Panc1 (cell line): ENCODE measurements at regions of chr1 and their contacts with region 1.

Region 1: GRCh38 chr1:222095606-222096475 is 354.0 kb upstream of the DUSP10 start:
- DNase-seq: peak; percentile 32
- ATAC-seq: peak; percentile 72; the same call in 1 of the 2 replicates
- H3K4me3 ChIP-seq: no peak overlapping the region
- H3K27ac ChIP-seq: no peak overlapping the region
- H3K4me1 ChIP-seq: no peaks in the 10 kb centered on the region
- H3K27me3 ChIP-seq: no peaks in the 10 kb centered on the region
- CTCF ChIP-seq: peak; percentile 91

Region 2: DNA sequence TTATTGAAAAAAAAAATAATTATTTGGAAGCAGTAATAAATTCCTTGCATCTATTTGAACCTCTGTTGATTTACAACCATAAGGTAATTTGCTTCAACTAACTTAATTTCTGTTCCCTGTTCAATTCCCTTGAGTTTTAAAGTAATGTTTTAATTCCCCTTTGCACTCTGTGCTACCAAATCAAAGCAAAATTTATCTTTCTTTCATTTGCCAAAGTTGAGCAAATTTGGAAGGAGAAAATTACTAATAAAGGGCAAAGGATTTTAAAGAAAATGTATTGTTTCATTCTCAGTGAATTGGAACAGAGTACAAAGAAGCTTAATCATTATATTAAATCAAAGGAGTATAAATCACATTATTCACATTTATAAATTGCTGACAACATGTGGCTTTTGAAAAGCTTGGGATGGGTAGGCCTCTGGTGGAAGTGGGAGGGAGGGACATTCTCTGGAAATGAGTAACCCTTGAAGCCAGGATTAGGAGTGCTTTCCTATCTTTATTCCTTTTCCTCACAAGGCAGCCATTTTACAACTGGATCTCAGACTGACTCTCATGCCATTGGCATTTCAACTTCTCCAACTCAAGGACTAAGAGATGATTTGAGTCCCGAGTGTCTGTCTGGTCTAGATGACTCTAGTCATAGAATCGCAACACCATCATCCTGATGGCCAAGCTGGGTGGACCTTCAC is 22.4 kb before region 1 on chr1:
- CTCF ChIA-PET with region 1: no interaction called
- POLR2A ChIA-PET with region 1: no interaction called
- in situ Hi-C with region 1: no loop called
- intact Hi-C with region 1: no loop called
- DNase-seq: no peak
- ATAC-seq: no peak
- H3K4me3 ChIP-seq: no peak overlapping the region
- H3K27ac ChIP-seq: no peak overlapping the region
- H3K4me1 ChIP-seq: no peaks in the 10 kb centered on the region
- H3K27me3 ChIP-seq: no peaks in the 10 kb centered on the region
- CTCF ChIP-seq: no peak

Region 3: DNA sequence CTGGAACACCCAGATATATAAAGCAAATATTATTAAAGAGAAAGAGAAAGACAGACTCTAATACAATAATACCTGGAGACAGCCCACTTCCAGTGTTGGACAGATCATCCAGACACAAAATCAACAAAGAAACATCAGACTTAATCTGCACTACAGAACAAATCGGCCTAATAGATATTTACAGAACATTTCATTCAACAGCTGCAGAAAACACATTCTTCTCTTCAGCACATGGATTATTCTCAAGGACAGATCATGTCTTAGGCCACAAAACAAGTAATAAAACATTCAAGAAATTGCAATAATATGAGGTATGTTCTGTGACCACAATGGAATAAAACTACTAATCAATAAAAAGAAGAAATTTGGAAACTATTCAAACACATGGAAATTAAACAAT is 44.4 kb after region 1 on chr1:
- CTCF ChIA-PET with region 1: no interaction called
- POLR2A ChIA-PET with region 1: no interaction called
- in situ Hi-C with region 1: no loop called
- intact Hi-C with region 1: loop called (anchors 1 kb)
- DNase-seq: no peak
- ATAC-seq: no peak
- H3K4me3 ChIP-seq: no peak overlapping the region
- H3K27ac ChIP-seq: no peak overlapping the region
- H3K4me1 ChIP-seq: no peaks in the 10 kb centered on the region
- H3K27me3 ChIP-seq: no peaks in the 10 kb centered on the region
- CTCF ChIP-seq: no peak